Heart right ventricle (tissue), 16 donors: ENCODE measurements at regions of chr21 and their contacts with region 1.

Region 1: DNA sequence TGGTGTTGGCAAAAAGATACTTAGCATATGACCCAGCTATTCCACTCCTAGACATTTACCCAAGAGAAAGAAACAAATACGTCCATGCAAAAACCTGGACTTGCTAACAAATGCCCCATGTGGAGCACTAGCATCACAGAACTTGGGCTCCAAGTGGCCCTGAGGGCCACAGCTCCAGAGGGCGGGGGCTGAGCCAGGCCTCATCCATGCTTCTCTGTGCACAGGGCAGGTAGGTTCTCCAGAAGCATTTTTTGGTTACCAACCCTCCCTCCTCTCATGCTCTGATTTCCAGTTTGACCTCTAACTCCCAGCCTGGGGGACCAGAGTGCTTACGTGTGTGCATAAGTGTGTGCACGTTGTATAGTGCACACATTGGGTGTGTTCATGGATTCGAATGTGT is 2.0 kb downstream of the KRTAP12-2 start:
- DNase-seq: no peak
- ATAC-seq: no peak
- H3K4me3 ChIP-seq: no peak overlapping the region
- H3K27ac ChIP-seq: no peak overlapping the region
- H3K4me1 ChIP-seq: no peaks in the 10 kb centered on the region
- H3K27me3 ChIP-seq: peaks cover 0 to 6% (median 0%) of the 10 kb centered on the region in 7 donors
- CTCF ChIP-seq: no peak

Region 2: DNA sequence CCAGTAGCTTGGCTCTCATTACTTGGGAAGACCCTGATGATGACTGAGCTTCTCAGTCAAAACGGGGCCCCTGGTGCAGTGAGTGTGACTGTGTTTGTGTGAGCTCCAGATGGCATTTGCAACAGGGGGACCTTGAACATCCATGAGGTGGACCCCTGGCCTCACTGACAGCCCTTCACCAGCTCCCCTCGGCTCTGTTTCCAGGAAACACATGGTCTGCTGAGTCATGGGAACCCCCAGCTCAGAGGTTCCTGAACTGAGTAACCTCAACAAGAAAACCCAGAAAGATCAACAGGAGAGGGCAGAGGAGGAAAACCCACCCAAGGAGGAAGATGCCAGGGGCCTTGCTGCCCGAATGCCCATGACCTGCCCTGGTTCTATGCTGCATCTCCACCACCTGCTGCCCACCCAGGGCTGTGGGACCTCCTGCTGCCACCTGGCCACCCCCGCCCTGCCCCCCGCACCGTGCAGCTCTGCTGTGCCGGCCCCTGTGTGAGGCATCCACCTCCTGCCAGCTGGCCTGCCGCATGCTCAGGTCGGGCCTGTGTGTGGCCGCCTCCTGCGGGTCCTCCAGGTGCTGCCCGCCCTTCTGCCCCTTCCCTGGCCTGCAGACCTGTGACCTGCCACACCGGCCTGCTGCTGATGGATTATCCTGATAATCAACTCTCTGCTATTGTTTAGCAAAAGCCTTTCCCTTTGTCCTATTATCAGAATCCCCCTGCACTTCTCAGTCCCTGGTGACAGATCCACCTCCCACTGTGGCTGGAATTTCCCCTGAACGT is 21.5 kb after region 1 on chr21:
- intact Hi-C with region 1: loop called in 1 of 10 experiments (anchors 2 kb)
- DNase-seq: no peak
- ATAC-seq: no peak
- H3K4me3 ChIP-seq: no peak overlapping the region
- H3K27ac ChIP-seq: no peak overlapping the region
- H3K4me1 ChIP-seq: no peaks in the 10 kb centered on the region
- H3K27me3 ChIP-seq: peaks cover 0 to 64% (median 30%) of the 10 kb centered on the region in 7 donors
- CTCF ChIP-seq: no peak